ENCODE measurements at regions of chr4 and their contacts with region 1.

Region 1: GRCh38 chr4:2910409-2910808 is 52.8 kb downstream of the NOP14 start:
- DNase-seq: no peak
- H3K4me3 ChIP-seq: no peak overlapping the region
- H3K27ac ChIP-seq: no peak overlapping the region
- H3K4me1 ChIP-seq: no peaks in the 10 kb centered on the region
- H3K27me3 ChIP-seq: no peaks in the 10 kb centered on the region
- CTCF ChIP-seq: no peak
- EP300 ChIP-seq: no peak
- POLR2A ChIP-seq: no peak

Region 2: DNA sequence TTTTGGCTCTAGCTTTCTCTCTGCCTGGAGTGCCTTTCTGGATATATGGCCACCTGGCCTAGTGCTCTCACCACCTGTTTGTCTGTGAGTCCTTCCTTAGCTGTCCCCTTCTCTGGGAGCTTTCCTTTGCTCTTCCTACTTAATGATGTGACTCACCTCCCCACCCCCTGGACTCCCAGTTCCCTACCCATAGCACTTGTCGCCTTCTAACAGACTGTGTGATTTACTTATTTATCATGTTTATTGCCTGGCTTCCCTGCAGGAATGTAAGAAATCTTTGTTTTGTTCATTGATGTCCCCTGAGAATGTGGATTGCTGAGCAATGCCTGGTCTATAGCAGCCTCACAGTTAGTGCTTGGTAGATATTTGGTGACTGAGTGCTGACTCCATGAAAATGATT is 47.9 kb before region 1 on chr4:
- intact Hi-C with region 1: loop called in 1 of 4 experiments (anchors 10 kb)
- DNase-seq: no peak
- H3K4me3 ChIP-seq: no peak overlapping the region
- H3K27ac ChIP-seq: no peak overlapping the region
- H3K4me1 ChIP-seq: peaks cover 38% of the 10 kb centered on the region
- H3K27me3 ChIP-seq: no peaks in the 10 kb centered on the region
- CTCF ChIP-seq: no peak
- EP300 ChIP-seq: no peak
- POLR2A ChIP-seq: no peak